ENCODE measurements at regions of chr2 and their contacts with region 1.

Region 1: DNA sequence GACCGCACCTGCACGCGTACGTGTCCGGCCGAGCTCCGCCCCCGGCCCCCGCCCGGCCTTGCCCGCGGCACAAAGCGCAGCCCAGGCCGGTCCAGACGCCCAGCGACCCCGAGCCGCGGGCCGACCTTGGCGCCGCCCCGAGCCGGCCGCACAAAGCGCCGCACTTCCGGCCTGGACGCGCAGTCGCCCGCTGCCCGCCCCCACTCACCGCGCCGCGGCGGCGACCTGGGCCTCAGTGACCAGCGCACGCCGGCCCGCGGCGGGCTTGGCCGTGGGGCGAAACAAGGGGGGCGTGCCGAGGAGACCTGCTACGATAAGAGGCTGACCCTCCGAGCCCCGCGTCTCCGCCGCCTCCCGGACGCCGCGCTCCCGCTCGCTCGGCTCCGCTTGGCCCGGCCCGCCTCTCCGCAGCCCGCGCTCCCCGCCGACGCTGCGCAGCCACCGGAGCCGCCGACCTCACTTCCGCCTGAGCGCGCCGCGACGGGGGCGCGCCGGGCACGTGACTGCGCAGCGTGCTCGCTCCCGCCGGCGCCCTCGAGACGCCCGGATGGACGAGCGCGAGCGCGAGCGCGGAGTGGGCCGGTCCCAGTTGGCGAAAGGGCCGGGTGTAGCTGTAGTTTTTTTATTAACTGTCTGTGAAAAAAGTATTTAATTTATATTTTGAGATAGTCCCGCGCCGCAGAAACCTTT is at the start of gene FAM168B:
- DNase-seq: peak; percentile 81 to 90 (median 85)
- H3K4me3 ChIP-seq: peak within 1 kb of the TSS; percentile 56 to 97 (median 80)
- H3K4me3 Mint-ChIP-seq: peak within 1 kb of the TSS; percentile 90 to 96
- H3K27ac ChIP-seq: peak within 1 kb of the TSS; percentile 88 to 91
- H3K27ac Mint-ChIP-seq: peak within 1 kb of the TSS; percentile 86 to 97 (median 96)
- H3K4me1 ChIP-seq: peaks cover 12 to 19% of the 10 kb centered on the region in 2 donors
- H3K4me1 Mint-ChIP-seq: peaks cover 13% of the 10 kb centered on the region
- H3K27me3 ChIP-seq: no peaks in the 10 kb centered on the region
- H3K27me3 Mint-ChIP-seq: peaks cover 0 to 7% (median 2%) of the 10 kb centered on the region in 3 donors
- CTCF ChIP-seq: no peak
- polyA plus RNA-seq, gene FAM168B: 20.5 to 33.2 (median 22.6) TPM

Region 2: DNA sequence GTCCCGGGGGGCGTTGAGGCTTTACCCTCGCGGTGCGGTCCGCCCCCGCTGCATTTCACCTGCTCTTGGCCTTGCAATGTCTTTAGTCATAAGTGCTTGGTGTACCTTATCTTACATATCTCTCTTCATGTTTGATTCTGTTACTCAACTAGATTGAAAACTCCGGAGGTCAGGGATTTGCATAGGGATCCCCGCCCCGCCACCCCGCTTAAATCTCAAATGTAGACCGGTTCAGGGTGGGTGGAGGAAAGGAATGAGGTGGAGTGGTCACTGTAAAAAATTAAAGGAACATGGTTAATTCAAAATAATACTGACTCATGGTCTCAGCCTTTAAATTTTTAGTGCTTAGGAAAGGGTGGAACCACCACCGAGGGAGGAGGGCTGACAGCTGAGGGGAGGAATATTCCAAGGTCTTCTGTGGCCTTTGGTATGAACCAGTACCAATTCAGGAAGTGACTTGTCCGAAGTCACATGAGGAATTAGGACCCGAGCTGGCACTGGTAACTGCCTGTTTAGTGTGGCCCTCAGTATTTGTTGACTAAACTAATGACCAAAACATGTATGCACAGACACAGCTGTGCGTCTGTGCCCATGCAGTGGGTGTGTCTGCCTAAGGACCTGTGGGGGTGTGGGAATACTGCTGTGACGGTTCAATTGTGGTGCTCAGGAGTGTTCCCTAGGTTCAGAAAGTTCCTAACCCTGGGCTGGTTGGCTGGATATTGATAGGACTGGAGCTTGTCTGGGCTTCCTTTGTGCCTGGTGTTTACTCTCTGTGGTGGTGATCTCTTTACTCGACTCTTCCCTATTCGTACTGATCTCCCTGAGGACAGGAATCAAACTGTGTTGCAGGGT is 13.0 kb after region 1 on chr2:
- intact Hi-C with region 1: loop called in 1 of 2 experiments (anchors 1 kb)
- DNase-seq: peak; percentile 85 to 89 (median 85)
- H3K4me3 ChIP-seq: peak overlapping the region; percentile 78 to 99 (median 98)
- H3K4me3 Mint-ChIP-seq: peak overlapping the region; percentile 98 to 99
- H3K27ac ChIP-seq: peak overlapping the region; percentile 93 to 97
- H3K27ac Mint-ChIP-seq: peak overlapping the region; percentile 96 to 99 (median 98)
- H3K4me1 ChIP-seq: peaks cover 22 to 26% of the 10 kb centered on the region in 2 donors
- H3K4me1 Mint-ChIP-seq: peaks cover 30% of the 10 kb centered on the region
- H3K27me3 ChIP-seq: no peaks in the 10 kb centered on the region
- H3K27me3 Mint-ChIP-seq: no peaks in the 10 kb centered on the region
- CTCF ChIP-seq: no peak

Region 3: DNA sequence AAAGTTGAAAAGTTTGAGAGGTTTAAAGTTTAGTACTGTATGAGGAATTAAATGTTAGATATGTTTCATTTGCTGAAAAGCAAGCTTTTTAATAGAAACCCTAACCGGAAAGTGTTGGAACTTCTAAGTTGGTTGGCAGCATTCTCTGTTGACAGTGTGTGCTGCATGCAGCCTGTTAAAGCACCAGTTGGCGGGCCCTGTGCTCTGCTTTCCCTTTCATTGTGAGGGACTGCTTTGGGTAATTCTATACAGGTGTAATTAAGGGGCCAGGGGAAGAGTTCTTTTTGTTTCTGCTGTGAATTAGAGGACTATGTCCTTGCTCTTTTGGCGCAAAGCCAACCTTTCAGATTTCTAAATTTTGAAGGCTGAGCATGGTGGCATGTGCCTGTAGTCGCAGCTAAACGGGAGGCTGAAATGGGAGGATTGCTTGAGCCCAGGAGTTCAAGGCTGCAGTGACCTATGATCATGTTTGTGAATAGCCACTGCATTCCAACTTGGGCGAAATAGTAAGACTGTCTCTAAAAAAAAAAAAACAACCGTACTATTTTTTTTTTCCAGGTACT is 32.1 kb after region 1 on chr2:
- intact Hi-C with region 1: loop called in 1 of 2 experiments (anchors 5 kb)
- DNase-seq: no peak
- H3K4me3 ChIP-seq: no peak overlapping the region
- H3K4me3 Mint-ChIP-seq: no peak overlapping the region
- H3K27ac ChIP-seq: no peak overlapping the region
- H3K27ac Mint-ChIP-seq: peak overlapping the region in 3 of 7 donors; percentile 7 to 36 (median 10)
- H3K4me1 ChIP-seq: no peaks in the 10 kb centered on the region
- H3K4me1 Mint-ChIP-seq: no peaks in the 10 kb centered on the region
- H3K27me3 ChIP-seq: no peaks in the 10 kb centered on the region
- H3K27me3 Mint-ChIP-seq: no peaks in the 10 kb centered on the region
- CTCF ChIP-seq: no peak